WTC11 (cell line): ENCODE measurements at regions of chr7 and their contacts with region 1.

Region 1: GRCh38 chr7:142557971-142558582 is 191.2 kb upstream of the PRSS1 start:
- DNase-seq: peak; percentile 76
- ATAC-seq: peak; percentile 93
- H3K4me3 Mint-ChIP-seq: no peak overlapping the region
- H3K27ac Mint-ChIP-seq: no peak overlapping the region
- H3K4me1 Mint-ChIP-seq: peaks cover 2% of the 10 kb centered on the region; the same call in 1 of the 2 replicates
- H3K27me3 Mint-ChIP-seq: peaks cover 3% of the 10 kb centered on the region; the same call in 1 of the 2 replicates
- CTCF ChIP-seq: peak; percentile 61

Region 2: DNA sequence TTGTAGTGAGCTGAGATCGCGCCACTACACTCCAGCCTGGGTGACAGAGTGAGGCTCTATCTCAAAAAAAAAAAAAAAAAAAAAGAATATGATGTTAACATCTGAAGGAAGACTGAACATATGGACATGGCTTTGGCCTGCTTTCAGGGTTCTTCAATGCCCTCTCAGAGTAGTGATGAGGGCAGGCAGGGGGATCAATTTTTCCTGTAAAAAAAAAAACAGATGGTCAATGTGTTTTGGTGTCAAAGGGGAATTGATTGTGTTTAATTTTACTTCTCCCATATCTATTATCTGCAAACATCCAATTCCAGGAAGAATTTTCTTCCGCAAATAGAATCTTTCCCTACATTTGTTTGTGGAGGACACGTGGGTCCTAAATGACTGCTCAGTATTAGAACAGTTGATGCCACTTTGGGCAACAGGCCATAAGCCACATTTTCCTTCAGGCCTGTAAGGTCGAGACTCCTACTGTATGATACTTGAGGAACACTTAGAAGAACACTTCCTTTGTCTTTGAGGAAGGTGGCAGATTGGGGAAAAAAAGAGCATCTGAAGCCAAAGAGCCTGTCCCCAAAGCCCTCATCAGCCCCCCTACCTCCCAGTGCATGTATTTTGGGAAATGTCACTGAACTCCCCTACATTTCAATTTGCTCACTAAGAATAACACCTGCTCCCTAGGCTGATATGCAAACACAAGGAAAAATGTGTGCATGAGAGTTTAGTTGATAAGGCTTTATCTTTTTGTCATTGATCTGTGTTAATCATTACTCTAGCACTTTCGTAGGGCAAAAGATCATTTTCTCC is 418.3 kb before region 1 on chr7:
- CTCF ChIA-PET with region 1: no interaction called
- POLR2A ChIA-PET with region 1: no interaction called
- DNase-seq: no peak
- ATAC-seq: no peak
- H3K4me3 Mint-ChIP-seq: no peak overlapping the region
- H3K27ac Mint-ChIP-seq: no peak overlapping the region
- H3K4me1 Mint-ChIP-seq: peaks cover 6% of the 10 kb centered on the region
- H3K27me3 Mint-ChIP-seq: no peaks in the 10 kb centered on the region
- CTCF ChIP-seq: no peak

Region 3: GRCh38 chr7:142516038-142516501 is 42.0 kb before region 1 on chr7:
- CTCF ChIA-PET with region 1: interaction called, 15 read pairs
- POLR2A ChIA-PET with region 1: no interaction called
- DNase-seq: peak; percentile 26
- ATAC-seq: peak; percentile 92
- H3K4me3 Mint-ChIP-seq: no peak overlapping the region
- H3K27ac Mint-ChIP-seq: no peak overlapping the region
- H3K4me1 Mint-ChIP-seq: peaks cover 9% of the 10 kb centered on the region
- H3K27me3 Mint-ChIP-seq: peaks cover 5% of the 10 kb centered on the region; the same call in 1 of the 2 replicates
- CTCF ChIP-seq: peak; percentile 41; the same call in 1 of the 2 replicates

Region 4: DNA sequence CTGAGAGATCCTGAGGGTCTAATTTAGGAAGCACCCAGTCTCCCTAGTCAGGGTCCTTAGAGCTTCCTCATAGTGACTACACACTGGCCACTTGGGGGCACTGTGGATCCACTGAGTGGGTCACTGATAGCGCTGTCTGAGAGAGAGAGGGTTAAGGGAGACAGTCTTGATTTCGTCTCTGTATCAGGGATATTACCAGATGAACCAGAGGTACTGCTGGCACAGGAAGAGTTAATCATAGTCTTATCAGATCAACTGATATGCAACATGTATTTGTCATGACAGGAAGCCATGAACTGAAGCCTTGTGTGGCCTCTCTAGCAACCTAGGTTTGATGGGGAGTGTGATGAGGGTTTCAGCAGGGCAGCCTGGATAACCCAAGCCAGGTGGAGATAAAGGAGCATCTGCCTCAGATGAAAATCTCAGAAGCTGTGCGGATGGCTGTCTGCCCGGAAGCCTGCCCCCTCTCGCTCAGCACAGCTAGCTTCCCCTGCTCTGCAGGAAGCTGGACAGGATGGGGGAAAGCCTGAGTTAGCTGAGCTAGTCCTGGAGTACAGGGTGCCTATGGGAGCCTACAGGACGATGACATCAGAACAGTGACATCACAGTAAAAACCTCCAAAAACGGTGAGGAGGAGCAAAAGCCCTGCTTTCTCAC is 22.8 kb before region 1 on chr7:
- CTCF ChIA-PET with region 1: interaction called, 61 read pairs
- POLR2A ChIA-PET with region 1: no interaction called
- DNase-seq: peak; percentile 86
- ATAC-seq: peak; percentile 100
- H3K4me3 Mint-ChIP-seq: peak overlapping the region; percentile 42; the same call in 1 of the 2 replicates
- H3K27ac Mint-ChIP-seq: 0 out of 2 replicates have a peak overlapping the region, but pooled peaks have one; percentile 42
- H3K4me1 Mint-ChIP-seq: peaks cover 4% of the 10 kb centered on the region
- H3K27me3 Mint-ChIP-seq: peaks cover 5% of the 10 kb centered on the region; the same call in 1 of the 2 replicates
- CTCF ChIP-seq: peak; percentile 70

Region 5: GRCh38 chr7:142568435-142569097 is 10.5 kb after region 1 on chr7:
- CTCF ChIA-PET with region 1: interaction called, 42 read pairs
- POLR2A ChIA-PET with region 1: interaction called, 3 read pairs
- DNase-seq: no peak
- ATAC-seq: no peak
- H3K4me3 Mint-ChIP-seq: no peak overlapping the region
- H3K27ac Mint-ChIP-seq: no peak overlapping the region
- H3K4me1 Mint-ChIP-seq: no peaks in the 10 kb centered on the region
- H3K27me3 Mint-ChIP-seq: peaks cover 3% of the 10 kb centered on the region; the same call in 1 of the 2 replicates
- CTCF ChIP-seq: no peak

Region 6: DNA sequence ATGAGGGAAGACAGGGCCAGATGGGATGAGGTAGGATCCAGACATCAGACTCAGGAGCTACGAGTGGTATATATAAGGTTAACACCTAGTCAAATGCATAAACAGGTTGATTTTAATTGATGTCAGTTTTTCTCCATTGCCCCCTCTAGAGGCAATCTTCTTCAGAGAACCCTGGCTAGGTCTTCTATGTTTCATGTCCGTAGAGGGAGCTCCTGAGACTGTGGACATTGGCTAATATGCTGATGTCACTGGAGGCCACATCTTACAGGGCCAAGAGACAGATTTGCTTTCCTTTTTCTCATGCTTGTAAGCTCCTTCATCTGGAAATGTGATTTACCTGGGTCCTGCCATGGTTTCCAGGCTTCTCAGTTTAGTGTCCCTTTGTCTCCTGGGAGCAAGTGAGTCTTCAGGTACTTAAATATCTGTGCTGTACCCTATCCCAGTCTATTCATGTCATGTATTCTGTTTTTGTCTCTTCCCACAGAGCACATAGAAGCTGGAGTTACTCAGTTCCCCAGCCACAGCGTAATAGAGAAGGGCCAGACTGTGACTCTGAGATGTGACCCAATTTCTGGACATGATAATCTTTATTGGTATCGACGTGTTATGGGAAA is 29.6 kb after region 1 on chr7:
- CTCF ChIA-PET with region 1: interaction called, 55 read pairs
- POLR2A ChIA-PET with region 1: no interaction called
- DNase-seq: no peak
- ATAC-seq: peak; percentile 98
- H3K4me3 Mint-ChIP-seq: no peak overlapping the region
- H3K27ac Mint-ChIP-seq: no peak overlapping the region
- H3K4me1 Mint-ChIP-seq: peaks cover 10% of the 10 kb centered on the region
- H3K27me3 Mint-ChIP-seq: no peaks in the 10 kb centered on the region; the same call in 1 of the 2 replicates
- CTCF ChIP-seq: no peak

Region 7: GRCh38 chr7:142603870-142604448 is 45.9 kb after region 1 on chr7:
- CTCF ChIA-PET with region 1: interaction called, 12 read pairs
- POLR2A ChIA-PET with region 1: no interaction called
- DNase-seq: peak; percentile 60
- ATAC-seq: peak; percentile 55
- H3K4me3 Mint-ChIP-seq: no peak overlapping the region
- H3K27ac Mint-ChIP-seq: no peak overlapping the region
- H3K4me1 Mint-ChIP-seq: 0 out of 2 replicates have a peak, but pooled peaks cover 2% of the 10 kb centered on the region
- H3K27me3 Mint-ChIP-seq: no peaks in the 10 kb centered on the region; the same call in 1 of the 2 replicates
- CTCF ChIP-seq: peak; percentile 42; the same call in 1 of the 2 replicates

Region 8: DNA sequence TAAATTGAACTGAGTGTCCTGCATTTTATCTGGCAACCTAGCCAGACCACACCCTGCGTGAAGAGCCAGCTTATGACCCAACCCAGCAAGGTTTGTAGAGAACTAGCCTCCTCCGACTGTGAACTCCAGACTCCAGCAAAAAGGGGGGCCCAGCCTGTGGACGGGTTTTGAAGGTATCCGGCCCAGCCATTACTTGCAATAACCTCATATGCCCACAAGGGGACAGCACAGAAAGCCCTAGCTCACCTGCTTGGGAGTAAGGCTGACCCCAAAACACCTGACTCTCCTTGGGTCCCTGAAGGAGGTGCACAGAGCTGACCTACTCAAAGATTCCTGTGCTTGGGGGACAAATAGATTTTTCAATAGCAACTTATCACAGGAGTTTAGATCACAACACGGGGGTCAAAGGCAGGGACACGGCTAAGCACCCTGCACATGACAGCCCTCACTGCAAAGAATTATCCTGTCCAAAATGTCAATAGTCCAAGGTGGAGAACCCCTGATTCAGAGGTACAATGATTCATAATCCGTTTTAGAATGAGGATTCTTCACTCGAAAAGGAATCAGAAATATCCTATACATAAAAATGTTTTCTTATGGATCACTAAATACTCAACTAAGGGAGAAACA is 322.9 kb after region 1 on chr7:
- CTCF ChIA-PET with region 1: no interaction called
- POLR2A ChIA-PET with region 1: no interaction called
- DNase-seq: peak; percentile 72
- ATAC-seq: peak; percentile 72
- H3K4me3 Mint-ChIP-seq: no peak overlapping the region
- H3K27ac Mint-ChIP-seq: no peak overlapping the region
- H3K4me1 Mint-ChIP-seq: peaks cover 6% of the 10 kb centered on the region
- H3K27me3 Mint-ChIP-seq: no peaks in the 10 kb centered on the region; the same call in 1 of the 2 replicates
- CTCF ChIP-seq: peak; percentile 96